Mucosa of descending colon (tissue), 3 donors: ENCODE measurements at regions of chr1 and their contacts with region 1.

Region 1: DNA sequence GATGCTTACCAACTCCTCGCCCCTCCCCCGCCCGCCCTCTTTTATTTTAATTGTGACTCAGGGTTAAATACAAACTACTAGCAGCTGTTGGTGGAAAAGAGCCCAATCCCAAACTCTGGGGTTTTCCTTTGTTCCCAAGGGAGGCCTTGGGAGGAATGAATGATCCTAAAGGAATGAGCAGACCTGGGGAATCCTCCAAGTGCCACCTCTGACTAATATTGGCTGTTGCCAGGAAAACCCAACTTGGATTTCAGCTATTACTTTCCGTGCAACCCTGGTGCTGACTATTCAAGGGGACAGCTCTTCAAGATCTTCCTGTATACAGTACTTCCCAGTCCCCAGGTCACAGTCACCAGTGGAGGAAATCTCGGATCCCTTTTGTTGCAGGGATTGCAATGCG is 1.3 kb upstream of the S100A10 start:
- DNase-seq: no peak
- ATAC-seq: no peak
- H3K4me3 ChIP-seq: no peak overlapping the region
- H3K4me1 ChIP-seq: peaks cover 42% of the 10 kb centered on the region
- CTCF ChIP-seq: no peak

Region 2: DNA sequence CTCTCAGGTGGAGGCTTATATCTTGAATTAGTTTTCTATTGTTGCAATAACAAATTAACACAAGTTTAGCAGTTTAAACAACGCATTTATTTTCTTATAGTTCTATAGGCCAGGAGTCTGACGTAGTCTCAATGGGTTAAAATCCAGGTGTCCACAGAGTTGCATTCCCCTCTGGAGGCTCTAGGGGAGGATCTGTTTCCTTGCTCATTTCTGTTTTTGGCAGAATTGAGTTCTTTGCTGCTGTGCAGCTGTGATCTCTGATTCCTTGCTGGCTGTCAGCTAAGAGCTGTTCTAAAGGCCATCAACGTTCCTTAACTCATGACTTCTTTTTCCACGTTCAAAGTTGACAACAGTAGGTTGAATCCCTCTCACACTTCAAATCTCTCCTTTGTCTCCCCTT is 33.1 kb before region 1 on chr1:
- intact Hi-C with region 1: loop called in 1 of 2 experiments (anchors 5 kb)
- DNase-seq: no peak
- ATAC-seq: peak; percentile 67
- H3K4me3 ChIP-seq: no peak overlapping the region
- H3K4me1 ChIP-seq: peaks cover 17% of the 10 kb centered on the region
- CTCF ChIP-seq: no peak

Region 3: DNA sequence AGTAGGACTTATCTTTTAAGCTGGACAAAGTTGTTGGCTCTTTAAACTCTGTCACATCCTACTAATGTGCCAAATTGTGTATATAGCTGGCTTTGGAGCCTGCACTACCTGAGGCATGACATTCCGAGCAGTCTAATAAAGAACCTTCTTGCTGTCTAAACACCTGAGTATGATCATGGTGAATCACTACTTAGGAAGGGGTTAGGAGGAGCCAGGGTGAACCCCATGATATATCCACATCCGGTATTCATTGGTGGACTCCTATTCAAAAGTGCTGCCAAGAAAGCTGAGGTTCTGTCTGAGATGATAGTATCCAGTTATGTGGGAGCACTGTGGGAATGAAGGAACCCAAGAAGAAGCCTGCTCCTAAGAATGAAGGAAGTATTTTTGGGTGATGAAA is 392.0 kb after region 1 on chr1:
- intact Hi-C with region 1: no loop called
- DNase-seq: no peak
- ATAC-seq: no peak
- H3K4me3 ChIP-seq: no peak overlapping the region
- H3K4me1 ChIP-seq: no peaks in the 10 kb centered on the region
- CTCF ChIP-seq: no peak